PC-9 (cell line): ENCODE measurements at regions of chr4 and their contacts with region 1.

Region 1: DNA sequence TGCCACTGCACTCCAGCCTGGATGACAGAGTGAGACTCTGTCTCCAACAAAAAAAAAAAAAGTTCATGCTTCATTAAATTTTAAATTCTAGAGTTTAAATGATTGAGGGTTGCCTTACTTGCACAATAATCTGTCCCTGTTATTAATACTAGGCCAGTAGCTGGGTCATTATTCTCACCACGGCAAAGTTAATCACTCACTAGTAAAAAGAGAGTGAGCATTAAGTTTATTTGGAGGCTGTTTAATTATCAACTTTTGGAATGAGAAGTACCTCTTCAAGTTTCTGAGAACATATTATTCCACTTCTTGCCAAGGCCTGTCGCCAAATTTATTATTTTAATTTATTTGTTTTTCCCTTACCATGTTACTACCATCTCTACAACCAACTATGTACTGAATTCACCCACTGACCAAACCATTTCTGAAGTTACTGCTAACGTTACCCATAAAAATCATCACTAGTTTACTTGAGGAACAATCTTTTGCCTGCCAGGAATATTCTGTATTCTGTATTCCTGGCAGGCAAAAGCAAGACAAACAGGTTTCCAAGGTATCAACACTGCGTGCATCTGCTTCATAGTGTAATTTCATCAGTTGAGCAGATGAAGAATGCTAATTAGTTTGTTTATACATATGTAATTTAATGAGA is 26.5 kb downstream of the GUCY1A1 start:
- DNase-seq: no peak
- H3K4me3 ChIP-seq: no peak overlapping the region
- H3K27ac ChIP-seq: no peak overlapping the region
- H3K4me1 ChIP-seq: no peaks in the 10 kb centered on the region
- H3K27me3 ChIP-seq: no peaks in the 10 kb centered on the region
- CTCF ChIP-seq: no peak

Region 2: GRCh38 chr4:155322782-155323181 is 370.4 kb before region 1 on chr4:
- CTCF ChIA-PET with region 1: no interaction called
- POLR2A ChIA-PET with region 1: interaction called, 10 read pairs
- intact Hi-C with region 1: no loop called
- DNase-seq: no peak
- H3K4me3 ChIP-seq: no peak overlapping the region
- H3K27ac ChIP-seq: no peak overlapping the region
- H3K4me1 ChIP-seq: no peaks in the 10 kb centered on the region
- H3K27me3 ChIP-seq: no peaks in the 10 kb centered on the region
- CTCF ChIP-seq: no peak

Region 3: DNA sequence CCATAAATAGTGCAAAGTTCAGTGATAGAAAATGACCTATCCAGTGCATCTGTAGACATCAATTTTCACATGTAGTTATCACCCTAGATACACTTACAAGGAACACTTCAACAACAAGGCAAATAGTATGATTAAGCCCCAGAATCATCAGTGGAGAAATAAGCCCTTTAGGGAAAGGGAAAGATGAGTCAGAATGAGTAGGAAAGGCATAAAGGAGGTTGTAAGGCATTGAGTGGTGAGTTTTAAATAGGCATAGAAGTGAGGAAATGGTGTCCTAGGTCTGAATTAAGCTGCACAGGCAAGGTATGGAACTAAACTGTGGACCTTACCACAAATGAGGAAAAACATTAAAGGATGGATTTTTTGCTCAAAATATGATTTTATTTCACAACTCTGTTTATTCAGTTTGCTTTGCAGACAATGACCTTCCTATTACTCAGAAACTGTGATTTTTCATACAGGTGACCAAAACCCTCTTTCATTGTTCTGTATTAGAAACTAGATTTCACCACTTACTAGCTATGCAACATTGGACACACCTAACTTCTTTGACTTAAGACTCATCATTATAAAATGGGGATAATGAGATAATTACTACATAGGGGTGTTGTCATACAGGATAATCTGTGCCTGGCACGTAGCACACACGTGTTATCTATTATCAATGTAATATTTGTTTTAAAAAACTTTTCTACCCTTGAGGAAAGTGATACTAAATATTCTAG is 259.3 kb before region 1 on chr4:
- CTCF ChIA-PET with region 1: no interaction called
- POLR2A ChIA-PET with region 1: no interaction called
- intact Hi-C with region 1: no loop called
- DNase-seq: peak in 1 of 2 experiments; percentile 34
- H3K4me3 ChIP-seq: no peak overlapping the region
- H3K27ac ChIP-seq: 0 out of 2 replicates have a peak overlapping the region, but pooled peaks have one; percentile 6
- H3K4me1 ChIP-seq: no peaks in the 10 kb centered on the region
- H3K27me3 ChIP-seq: no peaks in the 10 kb centered on the region
- CTCF ChIP-seq: no peak

Region 4: DNA sequence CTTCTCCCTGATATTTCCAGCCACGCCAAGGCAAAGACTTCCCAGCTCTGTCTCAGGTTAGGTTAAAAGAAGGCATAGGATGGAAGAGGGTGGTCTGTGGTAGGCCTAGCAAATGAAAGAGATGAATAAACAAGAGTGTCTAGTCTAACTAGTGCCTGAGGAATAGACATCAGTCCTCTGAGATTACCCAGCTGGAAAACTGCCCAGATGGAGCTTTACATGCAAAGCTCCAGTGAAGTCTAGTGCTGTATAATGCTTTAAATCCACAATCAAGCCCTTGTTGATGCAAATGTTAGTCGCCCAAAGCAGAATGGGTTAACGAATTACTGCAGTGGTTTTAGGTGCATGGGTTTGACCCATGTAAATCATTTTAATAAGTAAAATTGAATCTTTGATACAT is 40.9 kb after region 1 on chr4:
- CTCF ChIA-PET with region 1: no interaction called
- POLR2A ChIA-PET with region 1: interaction called, 14 read pairs
- intact Hi-C with region 1: no loop called
- DNase-seq: no peak
- H3K4me3 ChIP-seq: no peak overlapping the region
- H3K27ac ChIP-seq: no peak overlapping the region
- H3K4me1 ChIP-seq: no peaks in the 10 kb centered on the region
- H3K27me3 ChIP-seq: no peaks in the 10 kb centered on the region
- CTCF ChIP-seq: no peak